Activated CD8-positive, alpha-beta T cell treated with anti-CD3 and anti-CD28 coated beads for 36 hours (primary cell): ENCODE measurements at regions of chr17 and their contacts with region 1.

Region 1: GRCh38 chr17:77404812-77405581 is 264.2 kb downstream of the SEC14L1 start:
- DNase-seq: peak; percentile 96
- ATAC-seq: peak; percentile 76
- H3K4me3 Mint-ChIP-seq: peak overlapping the region; percentile 87
- H3K27ac Mint-ChIP-seq: peak overlapping the region; percentile 92
- H3K4me1 Mint-ChIP-seq: peaks cover 93% of the 10 kb centered on the region
- H3K27me3 Mint-ChIP-seq: no peaks in the 10 kb centered on the region
- CTCF ChIP-seq: no peak

Region 2: DNA sequence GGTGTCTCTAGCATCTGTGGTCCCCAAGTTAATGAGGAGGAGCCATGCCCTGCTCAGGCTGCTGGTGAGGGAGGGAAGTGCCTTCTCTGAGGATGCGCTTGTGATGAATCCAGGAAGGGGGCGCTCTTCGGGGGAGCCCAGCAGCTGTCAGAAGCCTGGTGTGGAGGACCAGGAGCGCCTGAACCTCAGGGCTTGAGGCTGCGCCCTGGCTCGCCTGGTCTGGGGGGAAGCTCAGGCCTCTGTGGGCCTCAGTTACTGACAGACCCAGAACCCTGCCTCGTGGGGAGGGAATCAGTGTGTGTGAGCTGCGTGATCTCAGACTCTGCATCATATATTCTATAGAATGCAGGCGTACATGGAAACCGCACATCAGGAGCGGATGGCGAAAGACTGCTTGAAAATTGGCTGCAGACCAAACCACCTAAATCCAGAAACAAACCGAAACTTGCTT is 138.1 kb before region 1 on chr17:
- CTCF ChIA-PET with region 1: no interaction called
- POLR2A ChIA-PET with region 1: no interaction called
- intact Hi-C with region 1: no loop called
- DNase-seq: peak; percentile 37
- ATAC-seq: peak; percentile 61
- H3K4me3 Mint-ChIP-seq: no peak overlapping the region
- H3K27ac Mint-ChIP-seq: no peak overlapping the region
- H3K4me1 Mint-ChIP-seq: no peaks in the 10 kb centered on the region
- H3K27me3 Mint-ChIP-seq: no peaks in the 10 kb centered on the region
- CTCF ChIP-seq: no peak

Region 3: DNA sequence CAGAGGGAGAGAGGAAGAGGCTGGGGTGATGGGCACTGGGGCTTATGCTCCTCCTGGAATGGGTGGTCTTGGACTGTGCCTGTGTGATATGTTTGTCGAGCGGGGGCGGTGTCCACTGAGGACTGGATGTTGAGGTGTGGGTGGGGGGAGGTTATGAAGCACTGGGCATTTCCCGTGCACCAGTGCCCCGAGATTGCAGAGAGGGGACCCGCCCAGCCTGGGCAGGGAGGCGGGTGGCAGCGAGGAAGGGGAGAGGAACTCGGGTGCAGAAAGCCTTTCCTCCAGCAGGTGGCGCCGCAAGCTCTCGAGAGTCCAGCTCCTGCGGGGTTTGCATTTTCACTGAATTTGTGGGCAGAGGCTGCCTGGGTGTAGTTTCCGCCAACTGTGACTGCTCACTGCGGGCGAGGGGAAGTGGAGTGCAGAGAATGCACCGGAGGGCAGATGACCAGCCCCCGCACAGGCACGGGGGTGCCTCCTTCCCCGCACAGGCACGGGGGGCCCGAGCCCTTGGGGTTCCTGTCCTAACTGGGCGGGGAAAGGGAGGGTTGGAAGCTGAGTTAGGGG is 73.6 kb before region 1 on chr17:
- CTCF ChIA-PET with region 1: interaction called, 32 read pairs
- POLR2A ChIA-PET with region 1: interaction called, 4 read pairs
- intact Hi-C with region 1: no loop called
- DNase-seq: peak; percentile 98
- ATAC-seq: peak; percentile 88
- H3K4me3 Mint-ChIP-seq: peak overlapping the region; percentile 54
- H3K27ac Mint-ChIP-seq: peak overlapping the region; percentile 90
- H3K4me1 Mint-ChIP-seq: peaks cover 45% of the 10 kb centered on the region
- H3K27me3 Mint-ChIP-seq: no peaks in the 10 kb centered on the region
- CTCF ChIP-seq: peak; percentile 98

Region 4: GRCh38 chr17:77382966-77383612 is 21.9 kb before region 1 on chr17:
- CTCF ChIA-PET with region 1: interaction called, 64 read pairs
- POLR2A ChIA-PET with region 1: interaction called, 7 read pairs
- intact Hi-C with region 1: no loop called
- DNase-seq: no peak
- ATAC-seq: peak; percentile 5
- H3K4me3 Mint-ChIP-seq: no peak overlapping the region
- H3K27ac Mint-ChIP-seq: peak overlapping the region; percentile 63
- H3K4me1 Mint-ChIP-seq: peaks cover 87% of the 10 kb centered on the region
- H3K27me3 Mint-ChIP-seq: no peaks in the 10 kb centered on the region
- CTCF ChIP-seq: no peak

Region 5: GRCh38 chr17:77420804-77421629 is 16.0 kb after region 1 on chr17:
- CTCF ChIA-PET with region 1: interaction called, 92 read pairs
- POLR2A ChIA-PET with region 1: interaction called, 31 read pairs
- intact Hi-C with region 1: no loop called
- DNase-seq: peak; percentile 58
- ATAC-seq: peak; percentile 64
- H3K4me3 Mint-ChIP-seq: peak overlapping the region; percentile 50
- H3K27ac Mint-ChIP-seq: peak overlapping the region; percentile 78
- H3K4me1 Mint-ChIP-seq: peaks cover 54% of the 10 kb centered on the region
- H3K27me3 Mint-ChIP-seq: no peaks in the 10 kb centered on the region
- CTCF ChIP-seq: no peak

Region 6: DNA sequence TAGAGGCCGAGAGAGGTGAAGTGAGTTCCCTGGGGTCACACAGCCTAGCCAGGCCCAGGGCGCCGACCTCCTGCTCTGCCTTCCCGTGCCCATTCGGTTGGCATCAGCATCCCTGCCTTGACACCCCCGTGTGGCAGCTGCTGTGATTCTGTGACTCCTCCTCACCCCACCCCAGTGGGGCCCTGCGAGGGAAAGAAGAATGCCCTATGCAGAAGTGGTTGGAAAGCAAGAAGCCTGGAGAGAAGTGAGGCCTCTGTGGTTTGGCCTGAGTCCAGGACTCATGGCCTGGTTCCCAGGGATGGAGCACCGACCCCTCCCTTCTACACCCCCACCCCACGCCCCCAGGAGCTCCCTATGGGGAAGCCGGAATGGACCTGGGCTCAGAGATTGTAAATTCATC is 32.0 kb after region 1 on chr17:
- CTCF ChIA-PET with region 1: interaction called, 124 read pairs
- POLR2A ChIA-PET with region 1: interaction called, 9 read pairs
- intact Hi-C with region 1: no loop called
- DNase-seq: no peak
- ATAC-seq: no peak
- H3K4me3 Mint-ChIP-seq: peak overlapping the region; percentile 89
- H3K27ac Mint-ChIP-seq: peak overlapping the region; percentile 91
- H3K4me1 Mint-ChIP-seq: peaks cover 85% of the 10 kb centered on the region
- H3K27me3 Mint-ChIP-seq: no peaks in the 10 kb centered on the region
- CTCF ChIP-seq: no peak

Region 7: DNA sequence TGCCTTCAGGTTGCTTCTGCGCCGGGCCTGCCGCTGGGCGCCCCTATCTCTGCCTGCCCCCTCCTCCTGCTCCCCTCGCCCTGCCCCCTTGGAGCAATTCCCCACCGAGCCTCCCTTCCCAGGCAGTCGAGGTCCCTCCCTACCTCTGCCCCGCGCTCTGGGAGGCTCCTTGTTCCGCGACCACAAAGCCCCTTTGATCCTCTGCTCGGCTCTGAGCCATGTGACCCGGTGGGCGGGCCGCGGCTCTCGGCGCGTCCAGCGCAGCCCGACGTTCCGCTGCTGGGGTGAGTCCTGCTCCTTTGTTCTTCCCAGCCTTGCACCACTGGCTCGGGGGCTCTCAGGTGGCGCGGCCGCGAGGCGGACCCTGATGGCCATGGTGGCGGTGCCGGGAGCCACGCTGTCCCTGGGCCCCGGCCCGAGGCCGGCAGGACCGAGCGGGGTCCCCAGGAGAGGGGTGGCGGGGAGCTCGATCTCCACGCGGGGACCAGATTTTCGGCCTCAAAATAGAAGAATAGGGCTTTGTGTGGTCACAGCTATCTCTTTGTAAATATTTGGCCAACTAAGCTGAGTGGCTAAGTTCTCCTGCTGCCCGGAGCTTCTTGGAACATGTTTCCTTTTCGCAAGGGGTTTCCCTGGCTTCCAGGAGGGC is 46.4 kb after region 1 on chr17:
- CTCF ChIA-PET with region 1: interaction called, 24 read pairs
- POLR2A ChIA-PET with region 1: interaction called, 14 read pairs
- intact Hi-C with region 1: loop called (anchors 5 kb)
- DNase-seq: peak; percentile 84
- ATAC-seq: peak; percentile 19
- H3K4me3 Mint-ChIP-seq: peak overlapping the region; percentile 84
- H3K27ac Mint-ChIP-seq: peak overlapping the region; percentile 96
- H3K4me1 Mint-ChIP-seq: peaks cover 30% of the 10 kb centered on the region
- H3K27me3 Mint-ChIP-seq: no peaks in the 10 kb centered on the region
- CTCF ChIP-seq: no peak

Region 8: GRCh38 chr17:77476931-77477877 is 72.2 kb after region 1 on chr17:
- CTCF ChIA-PET with region 1: interaction called, 10 read pairs
- POLR2A ChIA-PET with region 1: interaction called, 6 read pairs
- intact Hi-C with region 1: no loop called
- DNase-seq: peak; percentile 62
- ATAC-seq: no peak
- H3K4me3 Mint-ChIP-seq: peak overlapping the region; percentile 28
- H3K27ac Mint-ChIP-seq: peak overlapping the region; percentile 53
- H3K4me1 Mint-ChIP-seq: peaks cover 81% of the 10 kb centered on the region
- H3K27me3 Mint-ChIP-seq: no peaks in the 10 kb centered on the region
- CTCF ChIP-seq: no peak

Region 9: GRCh38 chr17:77602062-77602746 is 197.2 kb after region 1 on chr17:
- CTCF ChIA-PET with region 1: no interaction called
- POLR2A ChIA-PET with region 1: no interaction called
- intact Hi-C with region 1: no loop called
- DNase-seq: no peak
- ATAC-seq: no peak
- H3K4me3 Mint-ChIP-seq: no peak overlapping the region
- H3K27ac Mint-ChIP-seq: no peak overlapping the region
- H3K4me1 Mint-ChIP-seq: no peaks in the 10 kb centered on the region
- H3K27me3 Mint-ChIP-seq: no peaks in the 10 kb centered on the region
- CTCF ChIP-seq: no peak

Region 10: GRCh38 chr17:77768248-77768852 is 363.4 kb after region 1 on chr17:
- CTCF ChIA-PET with region 1: no interaction called
- POLR2A ChIA-PET with region 1: no interaction called
- intact Hi-C with region 1: no loop called
- DNase-seq: no peak
- ATAC-seq: no peak
- H3K4me3 Mint-ChIP-seq: no peak overlapping the region
- H3K27ac Mint-ChIP-seq: no peak overlapping the region
- H3K4me1 Mint-ChIP-seq: peaks cover 11% of the 10 kb centered on the region
- H3K27me3 Mint-ChIP-seq: no peaks in the 10 kb centered on the region
- CTCF ChIP-seq: no peak